ENCODE measurements at regions of chr13 and their contacts with region 1.

Region 1: GRCh38 chr13:30443957-30444404 is 21.7 kb downstream of the UBE2L5 start:
- DNase-seq: no peak
- ATAC-seq: peak; percentile 62
- H3K4me3 ChIP-seq: peak overlapping the region; percentile 26; the same call in 1 of the 2 replicates
- H3K27ac ChIP-seq: peak overlapping the region; percentile 56
- H3K4me1 ChIP-seq: peaks cover 43% of the 10 kb centered on the region
- H3K27me3 ChIP-seq: no peaks in the 10 kb centered on the region
- CTCF ChIP-seq: no peak
- EP300 ChIP-seq: 0 out of 4 replicates have a peak, but pooled peaks of 1 of the 2 experiments have one; percentile 5
- POLR2A ChIP-seq: no peak
- RAD21 ChIP-seq: 0 out of 2 replicates have a peak, but pooled peaks have one; percentile 4

Region 2: DNA sequence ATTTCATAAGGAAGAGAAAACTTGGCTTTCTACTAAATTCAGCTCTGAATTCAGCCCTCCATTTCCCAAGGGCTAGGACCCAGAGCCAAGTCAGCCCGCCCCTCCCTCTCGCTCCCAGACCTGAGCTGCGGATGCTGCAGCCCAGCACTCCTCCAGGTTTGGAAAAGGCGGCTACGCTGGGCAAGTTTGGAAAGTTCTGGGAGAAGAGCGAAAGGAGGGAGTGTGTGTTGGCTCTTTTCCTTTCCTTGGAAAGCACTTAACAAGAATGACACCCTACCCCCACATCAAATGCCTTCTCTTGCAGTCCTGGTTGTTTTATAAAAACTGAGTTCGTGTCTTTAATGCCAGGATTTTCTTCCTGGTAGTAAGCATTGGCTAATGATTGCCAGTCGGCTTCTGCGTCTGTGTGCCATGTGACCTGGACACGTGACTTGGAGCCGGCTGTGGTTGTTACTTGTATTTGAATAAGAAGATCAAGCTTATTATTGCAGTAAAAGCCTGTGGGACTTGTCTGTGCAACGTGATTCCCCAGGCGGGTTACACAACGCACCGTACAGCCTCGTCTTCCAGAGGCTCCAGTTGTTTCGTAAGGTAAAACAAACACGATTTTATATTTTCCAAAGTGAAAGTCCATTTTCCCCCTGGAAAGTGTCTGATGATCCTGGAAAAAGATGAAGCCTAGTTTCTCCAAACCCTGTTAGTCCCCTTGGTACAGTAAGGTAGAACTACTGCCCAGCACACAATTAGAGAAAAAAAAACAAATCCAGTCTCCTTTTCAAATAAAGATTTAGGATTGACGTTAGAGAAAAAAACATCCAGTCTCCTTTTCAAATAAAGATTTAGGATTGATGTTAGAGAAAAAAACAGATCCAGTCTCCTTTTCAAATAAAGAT is 48.5 kb before region 1 on chr13:
- CTCF ChIA-PET with region 1: interaction called, 8 read pairs
- POLR2A ChIA-PET with region 1: interaction called, 7 read pairs
- RAD21 ChIA-PET with region 1: interaction called, 8 read pairs
- SMC1A ChIA-PET with region 1: interaction called, 26 read pairs
- in situ Hi-C with region 1: no loop called
- intact Hi-C with region 1: no loop called
- DNase-seq: peak; percentile 60
- ATAC-seq: peak; percentile 85
- H3K4me3 ChIP-seq: peak overlapping the region; percentile 82
- H3K27ac ChIP-seq: peak overlapping the region; percentile 89
- H3K4me1 ChIP-seq: peaks cover 7% of the 10 kb centered on the region
- H3K27me3 ChIP-seq: no peaks in the 10 kb centered on the region
- CTCF ChIP-seq: no peak
- EP300 ChIP-seq: peak in 1 of 2 experiments; percentile 56; a peak in 1 of 4 replicates
- POLR2A ChIP-seq: peak; percentile 34
- RAD21 ChIP-seq: no peak

Region 3: DNA sequence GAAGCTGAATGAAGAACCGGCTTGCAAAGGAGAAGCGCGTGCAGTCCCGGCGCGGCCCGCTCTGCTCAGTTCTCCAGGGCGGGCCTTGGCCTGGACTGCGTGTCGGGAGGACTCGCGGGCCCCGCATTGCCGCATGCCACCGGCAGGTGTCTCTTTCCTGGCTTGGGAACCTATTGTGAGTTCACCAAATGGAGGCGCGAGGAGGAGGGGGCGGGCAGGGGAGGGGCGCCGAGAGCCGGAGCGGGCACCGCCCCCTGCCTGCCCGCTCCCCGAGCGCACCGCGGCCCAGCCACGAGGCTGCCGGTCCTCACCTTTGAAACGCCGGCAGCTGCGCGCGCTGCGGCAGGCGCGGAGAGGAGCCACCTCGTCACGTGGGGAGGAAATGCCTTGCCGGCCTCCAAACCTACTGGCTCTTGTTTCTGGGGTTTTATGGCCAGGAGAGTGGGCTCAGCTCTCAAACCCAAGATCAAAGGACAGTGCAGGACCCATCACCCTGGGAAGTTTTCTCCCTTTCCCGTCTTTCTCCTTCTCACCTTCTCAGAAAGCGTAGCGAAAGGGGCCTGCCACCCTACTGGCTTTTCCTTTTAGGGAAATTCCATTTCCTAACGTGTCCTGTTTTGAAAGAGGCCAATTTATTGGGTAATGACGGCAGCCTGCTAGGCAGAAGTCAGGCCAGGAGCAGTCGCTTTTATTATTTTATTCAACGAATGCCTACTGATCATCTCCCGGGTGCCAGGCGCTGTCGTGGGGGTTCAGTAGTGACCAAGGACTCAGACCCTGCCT is 35.5 kb before region 1 on chr13:
- CTCF ChIA-PET with region 1: interaction called, 6 read pairs
- POLR2A ChIA-PET with region 1: interaction called, 9 read pairs
- RAD21 ChIA-PET with region 1: interaction called, 13 read pairs
- SMC1A ChIA-PET with region 1: interaction called, 10 read pairs
- in situ Hi-C with region 1: no loop called
- intact Hi-C with region 1: loop called (anchors 5 kb)
- DNase-seq: no peak
- ATAC-seq: peak; percentile 97
- H3K4me3 ChIP-seq: no peak overlapping the region; the same call in 1 of the 2 replicates
- H3K27ac ChIP-seq: no peak overlapping the region
- H3K4me1 ChIP-seq: peaks cover 6% of the 10 kb centered on the region
- H3K27me3 ChIP-seq: no peaks in the 10 kb centered on the region
- CTCF ChIP-seq: peak; percentile 56 to 86 (median 74)
- EP300 ChIP-seq: 0 out of 4 replicates have a peak, but pooled peaks of 1 of the 2 experiments have one; percentile 22
- POLR2A ChIP-seq: peak; percentile 62
- RAD21 ChIP-seq: peak; percentile 72

Region 4: DNA sequence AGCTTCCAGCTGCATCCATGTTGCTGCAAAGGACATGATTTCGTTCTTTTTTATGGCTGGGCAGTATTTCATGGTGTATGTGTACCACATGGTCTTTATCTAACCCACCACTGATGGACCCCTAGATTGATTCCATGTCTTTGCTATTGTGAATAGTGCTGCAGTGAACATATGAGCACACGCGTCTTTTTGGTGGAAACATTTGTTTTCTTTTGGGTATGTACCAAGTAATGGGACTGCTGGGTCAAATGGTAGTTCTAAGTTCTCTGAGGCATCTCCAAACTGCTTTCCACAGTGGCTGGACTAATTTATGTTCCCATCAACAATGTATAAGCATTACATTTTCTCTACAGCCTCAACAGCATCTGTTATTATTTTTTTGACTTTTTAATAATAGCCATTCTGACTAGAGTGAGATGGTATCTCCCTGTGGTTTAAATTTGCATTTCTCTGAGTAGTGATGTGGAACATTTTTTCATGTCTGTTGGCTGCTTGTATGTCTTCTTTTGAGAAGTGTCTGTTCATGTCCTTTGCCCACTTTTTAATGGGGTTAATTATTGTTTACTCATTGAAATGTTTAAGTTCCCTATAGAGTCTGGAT is 28.5 kb before region 1 on chr13:
- CTCF ChIA-PET with region 1: interaction called, 6 read pairs
- POLR2A ChIA-PET with region 1: interaction called, 9 read pairs
- RAD21 ChIA-PET with region 1: interaction called, 10 read pairs
- SMC1A ChIA-PET with region 1: interaction called, 73 read pairs
- in situ Hi-C with region 1: no loop called
- intact Hi-C with region 1: no loop called
- DNase-seq: no peak
- ATAC-seq: peak; percentile 91
- H3K4me3 ChIP-seq: no peak overlapping the region; the same call in 1 of the 2 replicates
- H3K27ac ChIP-seq: no peak overlapping the region
- H3K4me1 ChIP-seq: peaks cover 15% of the 10 kb centered on the region; the same call in 1 of the 2 replicates
- H3K27me3 ChIP-seq: no peaks in the 10 kb centered on the region
- CTCF ChIP-seq: no peak
- EP300 ChIP-seq: no peak
- POLR2A ChIP-seq: no peak
- RAD21 ChIP-seq: no peak

Region 5: DNA sequence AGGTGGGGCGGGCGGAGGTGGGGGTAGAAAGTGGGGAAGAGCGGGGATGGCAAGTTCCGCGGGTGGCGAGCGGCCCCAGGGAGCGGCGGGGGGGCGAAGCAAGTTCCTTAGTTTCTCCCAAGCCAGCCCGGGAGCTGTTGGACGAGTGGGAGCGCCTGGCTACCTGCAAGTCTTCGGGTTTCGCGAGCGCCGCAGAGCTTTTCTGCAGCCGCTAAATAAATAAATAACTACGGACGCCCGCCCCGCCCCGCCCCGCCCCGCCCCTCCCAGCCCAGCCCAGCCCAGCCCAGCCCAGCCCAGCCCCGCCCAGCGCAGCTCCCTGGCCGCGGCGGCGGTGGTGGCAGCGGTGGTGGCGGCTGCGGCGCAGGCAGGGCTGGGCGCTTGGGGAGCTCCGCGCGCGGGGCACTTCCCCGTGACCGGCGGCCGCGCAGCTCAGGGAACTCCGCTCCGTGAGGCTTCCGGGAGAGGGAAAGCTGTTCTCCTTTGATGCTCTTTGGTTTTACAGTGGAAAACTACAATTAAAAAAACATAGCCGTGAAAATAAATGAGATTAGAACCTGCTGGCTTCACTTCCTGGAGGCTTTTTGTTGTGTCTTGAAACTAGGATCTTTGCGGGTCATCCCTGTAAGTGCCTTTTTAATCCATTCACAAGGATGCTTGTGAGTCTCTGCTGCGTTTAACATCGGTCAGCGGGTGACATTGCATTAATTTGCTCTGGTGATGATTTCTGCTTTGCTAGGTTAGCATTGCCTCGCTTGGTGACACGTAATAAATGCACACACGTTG is 21.7 kb before region 1 on chr13 and contains the start of gene UBE2L5:
- CTCF ChIA-PET with region 1: interaction called, 5 read pairs
- POLR2A ChIA-PET with region 1: interaction called, 12 read pairs
- RAD21 ChIA-PET with region 1: interaction called, 31 read pairs
- SMC1A ChIA-PET with region 1: interaction called, 73 read pairs
- in situ Hi-C with region 1: no loop called
- intact Hi-C with region 1: loop called (anchors 2 kb)
- DNase-seq: no peak
- ATAC-seq: peak; percentile 95
- H3K4me3 ChIP-seq: peak within 1 kb of the TSS; percentile 82
- H3K27ac ChIP-seq: peak within 1 kb of the TSS; percentile 50
- H3K4me1 ChIP-seq: peaks cover 2% of the 10 kb centered on the region; the same call in 1 of the 2 replicates
- H3K27me3 ChIP-seq: no peaks in the 10 kb centered on the region
- CTCF ChIP-seq: no peak
- EP300 ChIP-seq: no peak
- POLR2A ChIP-seq: peak; percentile 75
- RAD21 ChIP-seq: no peak
- polyA plus RNA-seq, gene UBE2L5: 0.03 to 0.11 TPM

Region 6: GRCh38 chr13:30429721-30430694 is 14.0 kb before region 1 on chr13:
- CTCF ChIA-PET with region 1: interaction called, 61 read pairs
- POLR2A ChIA-PET with region 1: interaction called, 57 read pairs
- RAD21 ChIA-PET with region 1: interaction called, 89 read pairs
- SMC1A ChIA-PET with region 1: interaction called, 155 read pairs
- in situ Hi-C with region 1: no loop called
- intact Hi-C with region 1: loop called (anchors 1 kb)
- DNase-seq: peak; percentile 59
- ATAC-seq: peak; percentile 82
- H3K4me3 ChIP-seq: peak overlapping the region; percentile 29
- H3K27ac ChIP-seq: peak overlapping the region; percentile 50
- H3K4me1 ChIP-seq: peaks cover 28% of the 10 kb centered on the region
- H3K27me3 ChIP-seq: no peaks in the 10 kb centered on the region
- CTCF ChIP-seq: no peak
- EP300 ChIP-seq: peak; percentile 54 to 69; a peak in 2 of 4 replicates
- POLR2A ChIP-seq: no peak
- RAD21 ChIP-seq: 0 out of 2 replicates have a peak, but pooled peaks have one; percentile 1

Region 7: DNA sequence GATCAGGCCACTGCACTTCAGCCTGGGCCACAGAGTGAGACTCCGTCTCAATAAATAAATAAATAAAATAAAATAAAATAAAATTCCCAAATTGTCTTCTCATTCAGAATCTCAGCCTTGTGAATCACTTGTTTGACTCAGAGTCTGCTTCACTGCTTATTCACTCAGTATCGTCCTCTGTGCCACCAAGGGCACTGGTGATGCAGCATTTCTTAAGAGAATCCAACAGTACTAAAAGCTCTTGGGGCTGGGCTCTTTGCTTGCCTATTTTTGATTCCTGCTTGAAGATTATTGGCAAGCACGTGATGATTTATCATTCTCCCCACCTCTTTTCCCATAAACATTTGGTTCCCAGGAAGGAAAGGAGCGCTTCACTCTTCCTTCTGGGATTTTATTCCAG is 76.6 kb after region 1 on chr13:
- CTCF ChIA-PET with region 1: no interaction called
- POLR2A ChIA-PET with region 1: no interaction called
- RAD21 ChIA-PET with region 1: no interaction called
- SMC1A ChIA-PET with region 1: no interaction called
- in situ Hi-C with region 1: no loop called
- intact Hi-C with region 1: no loop called
- DNase-seq: no peak
- ATAC-seq: no peak
- H3K4me3 ChIP-seq: no peak overlapping the region
- H3K27ac ChIP-seq: no peak overlapping the region
- H3K4me1 ChIP-seq: no peaks in the 10 kb centered on the region
- H3K27me3 ChIP-seq: no peaks in the 10 kb centered on the region
- CTCF ChIP-seq: no peak
- EP300 ChIP-seq: no peak
- POLR2A ChIP-seq: no peak
- RAD21 ChIP-seq: no peak

Measured in GM12878 (cell line).